Left cardiac atrium (tissue), 4 donors: ENCODE measurements at regions of chr11 and their contacts with region 1.

Region 1: DNA sequence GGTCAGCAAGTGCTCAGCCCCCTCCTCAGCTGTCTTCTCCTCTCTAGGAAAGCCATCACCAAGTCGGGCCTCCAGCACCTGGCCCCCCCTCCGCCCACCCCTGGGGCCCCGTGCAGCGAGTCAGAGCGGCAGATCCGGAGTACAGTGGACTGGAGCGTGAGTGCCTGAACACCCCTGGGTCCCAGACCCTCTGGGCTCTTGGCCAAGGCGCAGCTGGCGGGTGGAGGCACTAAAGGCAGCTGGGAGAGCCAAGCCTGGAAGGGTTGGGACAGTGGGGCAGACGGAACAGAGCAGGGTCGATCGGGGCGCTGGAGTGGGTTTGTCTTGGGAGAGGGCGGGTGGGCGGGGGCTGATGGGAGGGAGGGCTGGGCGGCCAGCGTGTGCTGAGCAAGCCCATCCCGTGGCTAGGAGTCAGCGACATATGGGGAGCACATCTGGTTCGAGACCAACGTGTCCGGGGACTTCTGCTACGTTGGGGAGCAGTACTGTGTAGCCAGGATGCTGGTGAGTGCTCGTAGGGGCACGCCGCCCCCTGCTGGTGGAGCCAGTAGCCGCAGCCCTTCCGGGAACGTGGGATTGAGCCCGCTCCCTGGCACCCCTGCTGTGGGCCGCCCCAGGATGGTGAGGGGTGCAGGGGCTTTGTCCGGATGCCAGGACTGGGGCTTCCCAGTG is 14.1 kb upstream of the MDK start:
- DNase-seq: peak; percentile 77
- ATAC-seq: peak; percentile 44 to 58

Region 2: GRCh38 chr11:46352063-46352841 is 15.1 kb before region 1 on chr11:
- intact Hi-C with region 1: loop called in 1 of 2 experiments (anchors 2 kb)
- DNase-seq: no peak
- ATAC-seq: peak; percentile 20 to 33